ENCODE measurements at regions of chr3 and their contacts with region 1.

Region 1: GRCh38 chr3:14439579-14440518 is 37.4 kb downstream of the SLC6A6 start:
- DNase-seq: no peak
- ATAC-seq: no peak
- H3K4me3 ChIP-seq: no peak overlapping the region
- H3K4me3 Mint-ChIP-seq: no peak overlapping the region
- H3K27ac ChIP-seq: no peak overlapping the region
- H3K27ac Mint-ChIP-seq: no peak overlapping the region
- H3K4me1 ChIP-seq: peaks cover 7% of the 10 kb centered on the region
- H3K4me1 Mint-ChIP-seq: peaks cover 34% of the 10 kb centered on the region
- H3K27me3 ChIP-seq: no peaks in the 10 kb centered on the region
- H3K27me3 Mint-ChIP-seq: no peaks in the 10 kb centered on the region
- CTCF ChIP-seq: no peak

Region 2: DNA sequence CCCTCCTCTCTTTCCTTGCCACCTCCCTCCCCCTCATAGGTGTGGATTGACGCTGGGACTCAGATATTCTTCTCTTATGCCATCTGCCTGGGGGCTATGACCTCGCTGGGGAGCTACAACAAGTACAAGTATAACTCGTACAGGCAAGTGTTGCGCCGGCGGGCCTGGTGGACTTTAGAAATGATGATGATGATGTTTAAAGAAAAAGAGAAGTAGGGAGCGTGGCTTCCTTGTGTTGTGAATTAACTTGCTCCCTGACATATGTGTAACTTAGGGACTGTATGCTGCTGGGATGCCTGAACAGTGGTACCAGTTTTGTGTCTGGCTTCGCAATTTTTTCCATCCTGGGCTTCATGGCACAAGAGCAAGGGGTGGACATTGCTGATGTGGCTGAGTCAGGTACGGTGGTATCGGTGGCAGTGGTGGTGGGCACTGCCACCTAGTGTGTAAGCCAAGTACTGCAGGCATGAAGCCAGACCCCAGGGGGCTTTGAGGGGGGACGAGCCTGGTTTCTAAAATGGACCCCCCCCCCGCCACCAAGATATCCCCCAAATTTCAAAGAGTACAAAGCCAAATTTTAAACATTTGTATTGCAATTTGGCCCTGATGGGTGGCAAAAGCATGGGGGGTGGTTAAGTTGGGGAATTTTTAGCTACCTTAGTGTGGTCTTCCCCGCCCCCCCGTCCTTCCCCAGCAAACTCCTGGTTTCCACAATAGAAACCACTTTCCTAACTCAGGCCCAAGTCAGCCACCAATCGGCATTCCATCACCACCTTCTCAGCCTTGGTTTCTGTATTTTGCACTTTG is 28.2 kb after region 1 on chr3:
- CTCF ChIA-PET with region 1: interaction called, 10 read pairs
- POLR2A ChIA-PET with region 1: no interaction called
- intact Hi-C with region 1: no loop called
- DNase-seq: peak; percentile 17 to 69 (median 48)
- ATAC-seq: peak; percentile 84
- H3K4me3 ChIP-seq: no peak overlapping the region
- H3K4me3 Mint-ChIP-seq: no peak overlapping the region
- H3K27ac ChIP-seq: no peak overlapping the region
- H3K27ac Mint-ChIP-seq: no peak overlapping the region
- H3K4me1 ChIP-seq: no peaks in the 10 kb centered on the region
- H3K4me1 Mint-ChIP-seq: no peaks in the 10 kb centered on the region
- H3K27me3 ChIP-seq: no peaks in the 10 kb centered on the region
- H3K27me3 Mint-ChIP-seq: no peaks in the 10 kb centered on the region
- CTCF ChIP-seq: peak; percentile 87